ENCODE measurements at regions of chr17 and their contacts with region 1.

Region 1: GRCh38 chr17:63478791-63479494 is 2.1 kb downstream of the ACE start:
- DNase-seq: peak; percentile 72 to 88 (median 77)
- ATAC-seq: peak; percentile 64 to 84 (median 81)
- H3K4me3 ChIP-seq: peak overlapping the region in 7 of 12 donors; percentile 53 to 77 (median 65)
- H3K27ac ChIP-seq: peak overlapping the region in 1 of 12 donors; percentile 83
- H3K4me1 ChIP-seq: peaks cover 4 to 60% (median 37%) of the 10 kb centered on the region in 12 donors
- H3K27me3 ChIP-seq: peaks cover 0 to 16% (median 0%) of the 10 kb centered on the region in 9 donors
- CTCF ChIP-seq: peak; percentile 67 to 86 (median 74)
- POLR2A ChIP-seq: no peak

Region 2: GRCh38 chr17:63434876-63435684 is 43.9 kb before region 1 on chr17:
- intact Hi-C with region 1: loop called in 5 of 10 experiments (anchors 5 kb)
- DNase-seq: peak; percentile 74 to 88 (median 81)
- ATAC-seq: peak; percentile 52 to 70 (median 67)
- H3K4me3 ChIP-seq: peak overlapping the region in 1 of 12 donors; percentile 39
- H3K27ac ChIP-seq: peak overlapping the region in 10 of 12 donors; percentile 8 to 74 (median 56)
- H3K4me1 ChIP-seq: peaks cover 8 to 81% (median 60%) of the 10 kb centered on the region in 12 donors
- H3K27me3 ChIP-seq: no peaks in the 10 kb centered on the region
- CTCF ChIP-seq: peak in 3 of 12 donors; percentile 6 to 24 (median 20)
- POLR2A ChIP-seq: no peak

Region 3: GRCh38 chr17:63445979-63446691 is 32.8 kb before region 1 on chr17 and contains the start of gene CYB561:
- intact Hi-C with region 1: loop called in 7 of 10 experiments (anchors 2 to 5 kb)
- DNase-seq: peak; percentile 68 to 89 (median 79)
- ATAC-seq: peak in 3 of 4 donors; percentile 23 to 85 (median 80)
- H3K4me3 ChIP-seq: peak within 1 kb of the TSS; percentile 34 to 84 (median 66)
- H3K27ac ChIP-seq: peak within 1 kb of the TSS; percentile 67 to 93 (median 88)
- H3K4me1 ChIP-seq: peaks cover 3 to 65% (median 38%) of the 10 kb centered on the region in 12 donors
- H3K27me3 ChIP-seq: no peaks in the 10 kb centered on the region
- CTCF ChIP-seq: peak; percentile 16 to 65 (median 52)
- POLR2A ChIP-seq: no peak
- total RNA-seq, gene CYB561: 4.8 to 19.2 (median 8.6) TPM